ENCODE measurements at regions of chr19 and their contacts with region 1.

Region 1: GRCh38 chr19:21698215-21698614 is 69.2 kb downstream of the ZNF100 start:
- DNase-seq: no peak
- H3K4me3 ChIP-seq: no peak overlapping the region
- H3K27ac ChIP-seq: no peak overlapping the region
- H3K4me1 ChIP-seq: peaks cover 0 to 15% (median 11%) of the 10 kb centered on the region in 4 donors
- H3K27me3 ChIP-seq: no peaks in the 10 kb centered on the region
- CTCF ChIP-seq: peak; percentile 61 to 77 (median 71)
- EP300 ChIP-seq: no peak
- POLR2A ChIP-seq: no peak

Region 2: GRCh38 chr19:21383980-21384582 is 314.1 kb before region 1 on chr19:
- intact Hi-C with region 1: no loop called
- DNase-seq: no peak
- H3K4me3 ChIP-seq: no peak overlapping the region
- H3K27ac ChIP-seq: no peak overlapping the region
- H3K4me1 ChIP-seq: no peaks in the 10 kb centered on the region
- H3K27me3 ChIP-seq: no peaks in the 10 kb centered on the region
- CTCF ChIP-seq: no peak
- EP300 ChIP-seq: no peak
- POLR2A ChIP-seq: no peak

Region 3: GRCh38 chr19:21482863-21483276 is 215.3 kb before region 1 on chr19:
- intact Hi-C with region 1: loop called (anchors 2 kb)
- DNase-seq: no peak
- H3K4me3 ChIP-seq: peak overlapping the region in 3 of 4 donors; percentile 32 to 42 (median 32)
- H3K27ac ChIP-seq: peak overlapping the region in 2 of 4 donors; percentile 31 to 43
- H3K4me1 ChIP-seq: peaks cover 0 to 10% (median 3%) of the 10 kb centered on the region in 4 donors
- H3K27me3 ChIP-seq: no peaks in the 10 kb centered on the region
- CTCF ChIP-seq: peak; percentile 77 to 93 (median 77)
- EP300 ChIP-seq: no peak
- POLR2A ChIP-seq: no peak

Region 4: GRCh38 chr19:21586311-21587116 is 111.7 kb before region 1 on chr19:
- intact Hi-C with region 1: loop called (anchors 5 kb)
- DNase-seq: no peak
- H3K4me3 ChIP-seq: peak overlapping the region; percentile 70 to 79 (median 74)
- H3K27ac ChIP-seq: peak overlapping the region; percentile 36 to 68 (median 57)
- H3K4me1 ChIP-seq: peaks cover 0 to 21% (median 17%) of the 10 kb centered on the region in 4 donors
- H3K27me3 ChIP-seq: peaks cover 0 to 12% (median 2%) of the 10 kb centered on the region in 4 donors
- CTCF ChIP-seq: no peak
- EP300 ChIP-seq: no peak
- POLR2A ChIP-seq: no peak

Region 5: GRCh38 chr19:21740559-21740958 is 42.3 kb after region 1 on chr19:
- intact Hi-C with region 1: no loop called
- DNase-seq: no peak
- H3K4me3 ChIP-seq: no peak overlapping the region
- H3K27ac ChIP-seq: no peak overlapping the region
- H3K4me1 ChIP-seq: no peaks in the 10 kb centered on the region
- H3K27me3 ChIP-seq: no peaks in the 10 kb centered on the region
- CTCF ChIP-seq: no peak
- EP300 ChIP-seq: no peak
- POLR2A ChIP-seq: no peak

Measured in esophagus muscularis mucosa (tissue), 4 donors.